HepG2 (cell line): ENCODE measurements at regions of chr7 and their contacts with region 1.

Region 1: GRCh38 chr7:139127648-139128047 is 18.1 kb upstream of the ZC3HAV1 start:
- DNase-seq: no peak
- ATAC-seq: no peak
- H3K4me3 ChIP-seq: no peak overlapping the region
- H3K27ac ChIP-seq: no peak overlapping the region
- H3K4me1 ChIP-seq: peaks cover 49% of the 10 kb centered on the region
- H3K27me3 ChIP-seq: peaks cover 0 to 4% of the 10 kb centered on the region in 2 experiments; a peak in 1 of 5 replicates
- CTCF ChIP-seq: peak; percentile 36
- EP300 ChIP-seq: no peak
- POLR2A ChIP-seq: no peak
- RAD21 ChIP-seq: no peak

Region 2: GRCh38 chr7:139016931-139017511 is 110.6 kb before region 1 on chr7:
- CTCF ChIA-PET with region 1: no interaction called
- POLR2A ChIA-PET with region 1: no interaction called
- in situ Hi-C with region 1: no loop called
- intact Hi-C with region 1: loop called (anchors 1 kb)
- DNase-seq: peak; percentile 68
- ATAC-seq: peak; percentile 96
- H3K4me3 ChIP-seq: no peak overlapping the region
- H3K27ac ChIP-seq: no peak overlapping the region
- H3K4me1 ChIP-seq: peaks cover 10% of the 10 kb centered on the region; the same call in 1 of the 2 replicates
- H3K27me3 ChIP-seq: peaks cover 0 to 22% of the 10 kb centered on the region in 2 experiments; a peak in 2 of 5 replicates
- CTCF ChIP-seq: peak; percentile 87
- EP300 ChIP-seq: no peak
- POLR2A ChIP-seq: no peak
- RAD21 ChIP-seq: peak; percentile 60

Region 3: GRCh38 chr7:139159900-139160675 is 32.4 kb after region 1 on chr7:
- CTCF ChIA-PET with region 1: no interaction called
- POLR2A ChIA-PET with region 1: no interaction called
- in situ Hi-C with region 1: no loop called
- intact Hi-C with region 1: loop called (anchors 1 kb)
- DNase-seq: no peak
- ATAC-seq: no peak
- H3K4me3 ChIP-seq: no peak overlapping the region
- H3K27ac ChIP-seq: no peak overlapping the region
- H3K4me1 ChIP-seq: peaks cover 12% of the 10 kb centered on the region
- H3K27me3 ChIP-seq: no peaks in the 10 kb centered on the region
- CTCF ChIP-seq: no peak
- EP300 ChIP-seq: no peak
- POLR2A ChIP-seq: no peak
- RAD21 ChIP-seq: no peak